WTC11 (cell line): ENCODE measurements at regions of chr7 and their contacts with region 1.

Region 1: GRCh38 chr7:43582503-43583423 is at the start of gene STK17A:
- DNase-seq: peak; percentile 92
- ATAC-seq: peak; percentile 93
- H3K4me3 Mint-ChIP-seq: peak within 1 kb of the TSS; percentile 85
- H3K27ac Mint-ChIP-seq: no peak within 1 kb of the TSS
- H3K4me1 Mint-ChIP-seq: peaks cover 41% of the 10 kb centered on the region
- H3K27me3 Mint-ChIP-seq: peaks cover 8% of the 10 kb centered on the region
- CTCF ChIP-seq: peak; percentile 91
- total RNA-seq, gene STK17A: 12.2 to 17.6 TPM (median 15.1 TPM) in 3 replicates

Region 2: GRCh38 chr7:43462836-43463235 is 119.9 kb before region 1 on chr7:
- CTCF ChIA-PET with region 1: interaction called, 21 read pairs
- POLR2A ChIA-PET with region 1: no interaction called
- DNase-seq: no peak
- ATAC-seq: no peak
- H3K4me3 Mint-ChIP-seq: no peak overlapping the region
- H3K27ac Mint-ChIP-seq: no peak overlapping the region
- H3K4me1 Mint-ChIP-seq: peaks cover 38% of the 10 kb centered on the region
- H3K27me3 Mint-ChIP-seq: no peaks in the 10 kb centered on the region
- CTCF ChIP-seq: no peak

Region 3: GRCh38 chr7:43560742-43561360 is 21.9 kb before region 1 on chr7:
- CTCF ChIA-PET with region 1: interaction called, 28 read pairs
- POLR2A ChIA-PET with region 1: interaction called, 4 read pairs
- DNase-seq: no peak
- ATAC-seq: no peak
- H3K4me3 Mint-ChIP-seq: no peak overlapping the region
- H3K27ac Mint-ChIP-seq: no peak overlapping the region
- H3K4me1 Mint-ChIP-seq: peaks cover 11% of the 10 kb centered on the region
- H3K27me3 Mint-ChIP-seq: no peaks in the 10 kb centered on the region
- CTCF ChIP-seq: no peak

Region 4: DNA sequence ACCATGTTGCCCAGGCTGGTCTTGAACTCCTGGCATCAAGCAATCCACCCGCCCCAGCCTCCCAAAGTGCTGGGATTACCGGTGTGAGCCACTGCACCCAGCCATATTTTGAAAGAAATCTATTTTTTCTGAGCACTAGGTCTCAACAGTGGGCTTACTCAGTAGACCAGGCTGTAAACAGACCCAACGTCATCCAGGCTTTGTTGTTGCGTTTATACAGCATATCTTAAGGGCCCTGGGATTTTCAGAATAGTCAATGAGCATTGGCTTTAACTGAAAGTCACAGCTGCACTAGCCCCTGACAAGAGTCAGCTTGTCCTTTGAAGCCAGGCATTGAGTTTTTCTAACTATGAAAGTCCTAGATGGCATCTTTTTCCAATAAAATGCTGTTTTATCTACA is 50.0 kb after region 1 on chr7:
- CTCF ChIA-PET with region 1: interaction called, 10 read pairs
- POLR2A ChIA-PET with region 1: interaction called, 3 read pairs
- DNase-seq: no peak
- ATAC-seq: no peak
- H3K4me3 Mint-ChIP-seq: no peak overlapping the region
- H3K27ac Mint-ChIP-seq: 0 out of 2 replicates have a peak overlapping the region, but pooled peaks have one; percentile 23
- H3K4me1 Mint-ChIP-seq: no peaks in the 10 kb centered on the region
- H3K27me3 Mint-ChIP-seq: no peaks in the 10 kb centered on the region
- CTCF ChIP-seq: no peak

Region 5: GRCh38 chr7:43711503-43711902 is 128.7 kb after region 1 on chr7:
- CTCF ChIA-PET with region 1: interaction called, 16 read pairs
- POLR2A ChIA-PET with region 1: interaction called, 3 read pairs
- DNase-seq: no peak
- ATAC-seq: no peak
- H3K4me3 Mint-ChIP-seq: no peak overlapping the region
- H3K27ac Mint-ChIP-seq: no peak overlapping the region
- H3K4me1 Mint-ChIP-seq: peaks cover 18% of the 10 kb centered on the region
- H3K27me3 Mint-ChIP-seq: no peaks in the 10 kb centered on the region
- CTCF ChIP-seq: no peak

Region 6: DNA sequence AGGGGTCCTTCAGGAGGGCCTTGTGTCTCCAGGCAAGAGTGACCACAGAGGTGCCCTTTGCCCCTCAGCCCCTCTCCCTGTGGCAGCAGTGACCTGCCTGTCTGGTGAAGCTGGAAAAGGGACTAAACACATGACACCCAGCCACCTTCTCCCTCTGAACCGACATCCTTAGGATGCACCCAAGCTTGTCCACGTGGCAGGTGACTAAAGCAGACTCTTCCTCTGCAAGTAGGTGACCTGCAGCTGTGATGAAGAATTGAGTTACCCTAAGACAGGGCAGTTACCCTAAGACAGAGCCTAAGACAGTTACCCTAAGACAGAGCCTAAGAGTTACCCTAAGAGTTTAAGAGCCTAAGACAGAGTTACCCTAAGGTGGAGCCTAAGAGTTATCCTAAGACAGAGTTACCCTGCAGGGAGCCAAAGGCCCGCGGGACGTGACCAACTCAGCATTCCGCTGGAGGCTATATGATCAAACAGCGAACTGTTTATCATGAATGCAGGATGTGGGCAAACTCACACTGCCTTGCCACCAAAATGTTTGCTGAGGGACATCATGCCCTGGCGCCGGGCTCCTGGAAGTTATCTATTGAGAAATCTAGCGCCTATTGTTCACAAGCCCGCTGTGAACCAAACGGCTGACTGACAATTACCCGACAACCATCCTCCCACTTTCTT is 225.5 kb after region 1 on chr7:
- CTCF ChIA-PET with region 1: interaction called, 13 read pairs
- POLR2A ChIA-PET with region 1: no interaction called
- DNase-seq: no peak
- ATAC-seq: no peak
- H3K4me3 Mint-ChIP-seq: no peak overlapping the region
- H3K27ac Mint-ChIP-seq: no peak overlapping the region
- H3K4me1 Mint-ChIP-seq: peaks cover 4% of the 10 kb centered on the region; the same call in 1 of the 2 replicates
- H3K27me3 Mint-ChIP-seq: peaks cover 14% of the 10 kb centered on the region
- CTCF ChIP-seq: no peak

Region 7: GRCh38 chr7:43942997-43943704 is 360.4 kb after region 1 on chr7:
- CTCF ChIA-PET with region 1: interaction called, 16 read pairs
- POLR2A ChIA-PET with region 1: no interaction called
- DNase-seq: no peak
- ATAC-seq: peak; percentile 58
- H3K4me3 Mint-ChIP-seq: no peak overlapping the region
- H3K27ac Mint-ChIP-seq: no peak overlapping the region
- H3K4me1 Mint-ChIP-seq: peaks cover 3% of the 10 kb centered on the region
- H3K27me3 Mint-ChIP-seq: no peaks in the 10 kb centered on the region
- CTCF ChIP-seq: no peak